Ascending aorta (tissue), 2 donors: ENCODE measurements at regions of chr3 and their contacts with region 1.

Region 1: DNA sequence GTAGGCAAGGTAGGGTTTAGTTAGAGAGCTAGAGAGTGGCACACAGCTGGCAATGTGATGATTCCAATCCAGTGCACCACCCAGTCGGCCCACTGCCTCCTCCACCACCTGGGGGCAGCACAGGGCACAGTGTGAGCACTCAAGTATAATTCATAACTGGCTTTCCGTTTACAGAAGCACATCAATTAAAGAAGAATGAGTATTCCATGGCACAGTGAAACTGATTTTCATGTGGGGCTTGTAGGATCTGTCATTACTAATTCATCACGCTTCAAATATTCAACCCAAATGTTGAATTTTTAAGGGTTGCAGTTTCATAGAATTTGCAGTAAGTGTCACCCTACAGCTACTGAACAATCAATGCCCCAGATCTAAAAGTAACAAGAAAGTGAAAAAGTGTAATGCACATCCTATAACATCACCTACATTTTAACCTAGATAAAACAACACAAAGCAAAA is 149.9 kb downstream of the IGSF11 start:
- DNase-seq: peak in 1 of 2 donors; percentile 72
- H3K4me3 ChIP-seq: no peak overlapping the region
- H3K27ac ChIP-seq: no peak overlapping the region
- H3K4me1 ChIP-seq: no peaks in the 10 kb centered on the region
- H3K27me3 ChIP-seq: no peaks in the 10 kb centered on the region
- CTCF ChIP-seq: peak; percentile 20 to 77 (median 65)

Region 2: DNA sequence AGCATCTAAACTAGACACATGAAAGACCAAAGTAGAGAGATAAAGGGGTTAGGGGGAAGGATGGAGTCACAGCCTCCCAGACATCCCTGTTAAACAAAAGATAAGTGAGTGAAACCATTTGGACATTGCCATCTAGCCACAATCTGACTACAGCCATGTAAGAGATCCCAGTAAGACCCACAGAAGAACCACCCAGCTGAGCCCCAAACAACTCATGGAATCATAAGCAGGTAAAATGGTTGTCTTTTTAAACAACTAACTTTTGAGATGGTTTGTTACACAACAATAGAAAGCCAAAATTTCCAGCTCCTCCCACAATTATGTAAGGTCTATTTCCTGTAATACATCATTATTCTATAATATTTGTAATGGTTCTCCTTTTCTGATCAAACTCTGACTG is 287.6 kb before region 1 on chr3:
- intact Hi-C with region 1: no loop called
- DNase-seq: no peak
- H3K4me3 ChIP-seq: no peak overlapping the region
- H3K27ac ChIP-seq: no peak overlapping the region
- H3K4me1 ChIP-seq: no peaks in the 10 kb centered on the region
- H3K27me3 ChIP-seq: no peaks in the 10 kb centered on the region
- CTCF ChIP-seq: no peak

Region 3: DNA sequence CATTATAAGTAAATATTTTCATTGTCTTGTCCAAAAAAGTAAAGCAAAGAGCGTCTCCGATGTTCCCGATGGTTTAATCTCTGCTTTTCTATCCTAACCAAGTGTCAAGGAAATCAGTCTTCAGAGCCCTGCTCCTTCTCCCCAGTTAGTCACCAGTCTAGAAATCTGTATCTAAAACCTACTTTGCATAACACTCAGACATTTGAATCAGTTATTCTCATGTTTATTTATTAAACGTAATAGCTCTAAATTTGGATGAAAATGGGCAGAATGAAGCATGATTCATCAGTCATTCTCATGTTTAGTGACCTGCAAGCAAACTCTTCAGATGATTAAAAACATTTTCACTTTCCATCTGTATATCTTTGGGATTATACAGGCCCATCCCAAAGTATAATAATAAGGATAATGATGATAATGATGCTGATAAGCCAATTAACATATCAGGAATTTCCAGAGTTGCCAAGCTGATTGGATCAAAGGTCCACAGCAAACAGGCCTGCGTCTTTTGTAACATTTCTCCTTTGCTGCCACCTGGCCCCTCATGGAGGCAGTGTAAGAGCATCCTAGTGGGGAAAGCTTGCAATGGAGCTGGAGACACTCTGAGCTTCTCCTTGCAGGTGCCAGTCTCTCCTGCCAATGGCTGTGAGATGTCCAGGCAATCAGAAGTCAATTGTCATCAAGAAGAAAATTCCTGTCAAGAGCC is 124.0 kb before region 1 on chr3:
- intact Hi-C with region 1: no loop called
- DNase-seq: no peak
- H3K4me3 ChIP-seq: no peak overlapping the region
- H3K27ac ChIP-seq: no peak overlapping the region
- H3K4me1 ChIP-seq: no peaks in the 10 kb centered on the region
- H3K27me3 ChIP-seq: no peaks in the 10 kb centered on the region
- CTCF ChIP-seq: no peak

Region 4: DNA sequence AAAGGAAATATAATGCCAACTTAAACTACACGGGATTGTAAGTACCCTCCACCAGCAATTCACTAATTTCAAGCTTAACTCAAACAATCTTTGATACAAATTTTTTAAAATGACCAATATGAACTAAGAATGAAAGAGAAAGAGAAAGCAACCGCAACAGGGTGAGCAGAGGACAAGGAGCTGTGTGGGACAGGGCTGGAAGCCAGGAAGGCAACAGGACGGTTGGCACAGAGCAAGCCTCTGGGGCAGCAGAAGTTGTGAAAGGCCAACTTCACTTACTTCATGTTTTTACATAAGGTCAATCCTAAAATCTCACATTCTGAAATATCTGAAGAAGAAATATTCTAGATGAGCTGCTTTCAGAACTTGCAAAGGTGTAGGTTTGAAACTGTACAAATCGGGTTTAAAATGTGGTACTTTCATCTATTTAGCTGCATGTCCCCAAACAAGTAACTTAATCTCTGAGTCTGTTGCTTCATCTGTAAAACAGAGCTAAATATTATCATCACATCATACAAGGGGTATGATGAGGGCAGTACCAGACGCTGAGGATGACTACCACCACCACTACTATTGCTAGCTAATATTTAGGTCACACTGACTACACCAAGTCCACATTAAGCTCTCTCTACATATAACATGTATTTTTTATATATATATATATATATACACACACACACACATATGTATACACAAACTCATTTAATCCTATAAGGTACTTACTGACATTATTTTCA is 48.2 kb after region 1 on chr3:
- intact Hi-C with region 1: no loop called
- DNase-seq: no peak
- H3K4me3 ChIP-seq: peak overlapping the region in 1 of 2 donors; percentile 28
- H3K27ac ChIP-seq: no peak overlapping the region
- H3K4me1 ChIP-seq: no peaks in the 10 kb centered on the region
- H3K27me3 ChIP-seq: no peaks in the 10 kb centered on the region
- CTCF ChIP-seq: no peak

Region 5: GRCh38 chr3:119034256-119035013 is 149.7 kb after region 1 on chr3 and contains the start of gene IGSF11:
- intact Hi-C with region 1: loop called (anchors 1 kb)
- DNase-seq: no peak
- H3K4me3 ChIP-seq: peak within 1 kb of the TSS; percentile 56 to 72
- H3K27ac ChIP-seq: no peak within 1 kb of the TSS
- H3K4me1 ChIP-seq: no peaks in the 10 kb centered on the region
- H3K27me3 ChIP-seq: no peaks in the 10 kb centered on the region
- CTCF ChIP-seq: peak in 2 of 3 experiments; percentile 34 to 38
- total RNA-seq, gene IGSF11: not detected

Region 6: GRCh38 chr3:119098619-119099222 is 213.9 kb after region 1 on chr3:
- intact Hi-C with region 1: loop called (anchors 1 kb)
- DNase-seq: no peak
- H3K4me3 ChIP-seq: no peak overlapping the region
- H3K27ac ChIP-seq: no peak overlapping the region
- H3K4me1 ChIP-seq: no peaks in the 10 kb centered on the region
- H3K27me3 ChIP-seq: no peaks in the 10 kb centered on the region
- CTCF ChIP-seq: peak in 2 of 3 experiments; percentile 48 to 67